AG04450 (cell line): ENCODE measurements at regions of chr11 and their contacts with region 1.

Region 1: GRCh38 chr11:20127671-20128527 is 32.4 kb downstream of the DBX1 start:
- DNase-seq: peak; percentile 48
- H3K4me3 ChIP-seq: no peak overlapping the region
- H3K27ac ChIP-seq: no peak overlapping the region
- H3K27me3 ChIP-seq: no peaks in the 10 kb centered on the region
- CTCF ChIP-seq: peak; percentile 89

Region 2: GRCh38 chr11:19846654-19847305 is 281.1 kb before region 1 on chr11:
- CTCF ChIA-PET with region 1: no interaction called
- POLR2A ChIA-PET with region 1: no interaction called
- DNase-seq: no peak
- H3K4me3 ChIP-seq: no peak overlapping the region
- H3K27ac ChIP-seq: no peak overlapping the region
- H3K27me3 ChIP-seq: no peaks in the 10 kb centered on the region
- CTCF ChIP-seq: no peak

Region 3: DNA sequence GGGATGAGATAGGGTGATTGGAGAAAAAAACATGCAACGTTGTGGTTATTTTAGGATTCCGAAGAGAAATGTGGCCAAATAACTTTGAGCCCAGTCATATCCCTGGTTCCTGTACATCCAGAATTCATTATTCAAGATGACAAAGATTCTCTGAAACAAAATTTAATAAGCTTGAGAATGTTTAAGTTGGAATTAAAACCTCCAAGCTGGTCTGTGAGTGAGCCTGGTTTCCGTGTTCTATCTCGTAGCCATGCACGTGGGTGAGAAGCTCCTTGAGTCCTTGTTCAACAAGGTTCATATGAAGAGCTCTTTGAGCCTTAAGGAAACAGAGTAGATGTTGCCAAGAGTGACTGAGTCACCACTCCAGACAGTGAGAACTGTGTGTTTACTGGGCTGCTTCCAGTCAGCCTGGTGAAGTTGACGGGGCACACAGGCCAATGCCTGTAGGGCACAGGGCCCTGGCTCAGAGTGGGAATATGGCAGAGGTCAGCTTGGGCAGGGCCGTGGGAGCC is 208.8 kb before region 1 on chr11:
- CTCF ChIA-PET with region 1: interaction called, 17 read pairs
- POLR2A ChIA-PET with region 1: no interaction called
- DNase-seq: peak; percentile 85
- H3K4me3 ChIP-seq: no peak overlapping the region
- H3K27ac ChIP-seq: peak overlapping the region; percentile 77
- H3K27me3 ChIP-seq: no peaks in the 10 kb centered on the region
- CTCF ChIP-seq: no peak

Region 4: DNA sequence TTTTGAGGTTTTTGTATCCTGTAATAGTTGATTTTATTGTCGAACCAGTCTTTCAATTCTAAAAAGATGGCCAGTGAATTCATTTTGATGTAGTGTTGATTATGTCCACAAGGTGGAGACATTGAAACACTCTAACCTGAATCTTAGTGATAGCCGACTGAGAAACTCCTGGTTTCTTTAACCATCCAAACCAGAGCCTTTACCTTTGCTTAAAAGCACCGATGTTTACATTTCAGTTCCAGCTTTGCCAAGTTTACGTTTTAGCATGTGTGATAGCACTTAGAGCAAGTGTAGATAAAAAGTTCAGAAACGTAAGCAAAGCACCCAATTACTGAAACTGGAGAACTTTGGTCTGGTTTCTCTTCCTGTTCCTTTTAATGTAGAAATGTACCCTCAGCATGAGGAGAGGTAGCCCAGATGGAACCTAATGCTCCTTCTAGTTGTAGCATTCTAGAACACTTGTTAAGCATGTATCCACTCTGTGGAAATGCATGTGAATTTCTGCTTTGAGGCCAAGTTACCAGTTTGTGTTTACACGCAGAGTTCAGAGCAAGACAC is 176.3 kb before region 1 on chr11:
- CTCF ChIA-PET with region 1: interaction called, 108 read pairs
- POLR2A ChIA-PET with region 1: interaction called, 3 read pairs
- DNase-seq: no peak
- H3K4me3 ChIP-seq: no peak overlapping the region
- H3K27ac ChIP-seq: no peak overlapping the region
- H3K27me3 ChIP-seq: no peaks in the 10 kb centered on the region
- CTCF ChIP-seq: peak; percentile 71

Region 5: DNA sequence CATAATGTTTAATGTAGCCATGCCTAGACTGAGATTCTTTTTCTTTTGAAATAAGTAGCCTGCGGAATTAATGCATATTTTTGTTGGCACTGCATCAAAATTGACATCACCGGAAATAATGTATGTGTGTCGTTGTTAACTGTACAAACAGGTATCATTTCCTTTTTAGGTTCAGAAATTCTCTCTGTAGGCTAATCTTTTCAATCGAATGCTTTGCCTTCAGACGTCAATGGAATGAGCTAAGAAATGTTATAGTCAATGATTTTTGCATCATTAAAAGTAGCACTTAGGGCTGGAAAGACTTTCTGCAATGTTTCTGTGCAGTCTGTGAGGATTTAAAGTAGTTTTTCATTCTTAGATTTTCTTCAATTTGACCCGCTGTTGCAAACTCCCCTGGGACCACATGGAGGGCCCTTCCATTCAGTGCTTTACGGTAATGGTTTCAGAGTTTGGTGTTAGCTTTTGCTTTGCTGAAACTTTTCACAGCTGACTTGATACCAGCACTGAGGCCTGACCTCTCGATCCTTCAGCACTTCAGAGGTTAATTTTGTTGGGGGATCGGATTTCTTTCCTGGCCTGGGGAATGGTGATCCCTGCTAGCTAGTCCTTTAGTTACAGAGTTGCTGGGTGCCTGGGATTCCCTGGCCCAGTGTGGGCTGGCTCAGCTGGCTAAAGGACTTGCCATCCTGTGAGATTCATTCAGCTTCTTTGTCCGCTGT is 105.4 kb before region 1 on chr11:
- CTCF ChIA-PET with region 1: interaction called, 15 read pairs
- POLR2A ChIA-PET with region 1: no interaction called
- DNase-seq: no peak
- H3K4me3 ChIP-seq: peak overlapping the region; percentile 39
- H3K27ac ChIP-seq: peak overlapping the region; percentile 43
- H3K27me3 ChIP-seq: no peaks in the 10 kb centered on the region
- CTCF ChIP-seq: no peak

Region 6: GRCh38 chr11:20154381-20154780 is 26.5 kb after region 1 on chr11:
- CTCF ChIA-PET with region 1: interaction called, 11 read pairs
- POLR2A ChIA-PET with region 1: no interaction called
- DNase-seq: no peak
- H3K4me3 ChIP-seq: no peak overlapping the region
- H3K27ac ChIP-seq: no peak overlapping the region
- H3K27me3 ChIP-seq: peaks cover 52% of the 10 kb centered on the region
- CTCF ChIP-seq: no peak

Region 7: GRCh38 chr11:20609727-20610707 is 482.1 kb after region 1 on chr11:
- CTCF ChIA-PET with region 1: interaction called, 44 read pairs
- POLR2A ChIA-PET with region 1: no interaction called
- DNase-seq: peak; percentile 13
- H3K4me3 ChIP-seq: no peak overlapping the region
- H3K27ac ChIP-seq: no peak overlapping the region
- H3K27me3 ChIP-seq: peaks cover 30% of the 10 kb centered on the region
- CTCF ChIP-seq: peak; percentile 95